Motor neuron (in vitro differentiated cells): ENCODE measurements at regions of chr3 and their contacts with region 1.

Region 1: DNA sequence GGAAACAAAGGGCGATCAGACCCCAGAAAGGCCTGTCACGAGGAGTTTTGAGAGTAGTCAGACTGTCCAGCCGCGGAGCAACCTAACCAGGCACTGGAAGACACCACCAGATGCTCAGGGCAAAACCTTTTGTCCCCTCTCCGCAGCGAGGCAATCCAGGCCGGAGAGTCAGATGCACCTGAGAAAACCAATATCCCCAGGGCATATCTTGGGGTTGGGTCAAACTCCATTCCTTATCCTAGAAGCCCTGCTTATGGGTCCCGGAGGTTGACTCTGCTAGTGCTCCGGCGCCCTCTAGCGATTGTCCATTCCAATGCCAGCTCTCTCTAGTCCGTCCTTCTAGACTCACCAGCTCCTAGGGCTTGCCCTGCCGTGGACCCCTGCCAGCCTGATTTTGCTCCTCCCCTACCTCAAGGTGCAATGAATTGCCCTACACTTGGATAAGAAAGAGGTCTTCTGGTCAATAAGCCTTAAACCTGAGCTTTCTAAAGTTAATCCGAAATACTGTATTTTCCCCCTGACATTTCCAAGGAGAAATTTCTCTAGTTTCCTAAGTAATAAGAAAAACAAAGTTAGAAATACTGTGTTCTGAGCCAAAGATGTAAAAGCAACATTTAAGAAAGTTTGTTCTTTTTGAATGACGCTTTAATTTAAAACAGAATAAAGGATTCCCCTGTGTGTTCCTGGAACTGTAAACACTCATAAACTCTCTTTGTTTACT is 5.5 kb downstream of the CPNE4 start:
- ATAC-seq: peak; percentile 99 to 100 (median 100)
- H3K4me3 ChIP-seq: no peak overlapping the region
- H3K27ac ChIP-seq: no peak overlapping the region
- H3K4me1 ChIP-seq: peaks cover 0 to 4% of the 10 kb centered on the region in 2 donors

Region 2: DNA sequence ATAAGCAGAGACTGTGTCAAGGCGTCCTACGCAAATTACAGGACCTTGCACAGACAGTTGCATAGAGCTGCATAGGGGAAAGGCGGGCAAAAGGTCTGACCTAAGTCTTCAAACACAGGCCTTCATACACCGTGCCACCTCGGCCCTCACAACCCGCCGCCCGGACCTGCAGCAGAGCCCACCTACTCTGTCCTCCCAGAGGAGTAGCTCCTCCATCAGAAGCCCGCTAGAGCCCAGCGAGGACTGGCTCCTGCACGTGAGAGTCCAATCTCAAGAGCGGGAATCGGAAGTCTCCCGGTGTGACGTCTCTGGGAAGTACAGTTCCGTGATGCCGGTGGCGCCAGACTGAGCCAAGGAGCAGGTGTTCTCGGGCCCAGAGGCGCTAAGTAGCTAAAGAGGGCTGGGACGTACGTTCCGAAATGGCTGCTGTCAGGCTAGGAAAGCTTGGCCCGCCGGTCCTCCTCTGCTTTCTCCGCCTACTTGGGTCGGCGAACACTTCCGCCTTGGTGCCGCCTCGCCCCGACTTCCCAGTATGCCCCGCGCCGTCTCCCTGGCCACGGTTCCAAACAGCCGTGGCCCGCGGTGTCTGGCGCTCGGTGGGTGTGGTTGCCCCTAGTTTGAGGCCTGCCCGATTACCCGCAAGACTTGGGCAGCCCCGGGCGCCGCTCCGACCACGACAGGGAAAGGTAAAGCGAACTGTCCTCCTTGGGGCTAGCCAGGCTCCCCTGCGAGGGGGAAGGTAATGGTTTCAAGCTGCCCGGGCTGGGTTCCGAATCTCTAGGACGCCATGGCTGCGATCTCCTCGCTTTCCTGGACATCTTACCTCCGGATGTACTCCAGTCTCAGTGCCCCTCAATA is 1002.8 kb before region 1 on chr3 and contains the starts of genes ASTE1 and NEK11:
- in situ Hi-C with region 1: loop called in 5 of 9 experiments (anchors 25 kb)
- ATAC-seq: peak; percentile 86 to 98 (median 96)
- H3K4me3 ChIP-seq: peak within 1 kb of the TSS; percentile 28 to 41 (median 33)
- H3K27ac ChIP-seq: peak within 1 kb of the TSS in 1 of 2 donors; percentile 29
- H3K4me1 ChIP-seq: no peaks in the 10 kb centered on the region
- total RNA-seq, gene ASTE1: 1.1 to 7.5 (median 3.5) TPM
- total RNA-seq, gene NEK11: 1.1 to 10.3 (median 3.4) TPM

Region 3: GRCh38 chr3:131794766-131795388 is 234.5 kb before region 1 on chr3:
- in situ Hi-C with region 1: loop called in 5 of 9 experiments (anchors 10 to 25 kb)
- ATAC-seq: peak; percentile 58 to 86 (median 73)
- H3K4me3 ChIP-seq: no peak overlapping the region
- H3K27ac ChIP-seq: no peak overlapping the region
- H3K4me1 ChIP-seq: peaks cover 18 to 28% of the 10 kb centered on the region in 2 donors